Calu3 (cell line): ENCODE measurements at regions of chr1 and their contacts with region 1.

Region 1: DNA sequence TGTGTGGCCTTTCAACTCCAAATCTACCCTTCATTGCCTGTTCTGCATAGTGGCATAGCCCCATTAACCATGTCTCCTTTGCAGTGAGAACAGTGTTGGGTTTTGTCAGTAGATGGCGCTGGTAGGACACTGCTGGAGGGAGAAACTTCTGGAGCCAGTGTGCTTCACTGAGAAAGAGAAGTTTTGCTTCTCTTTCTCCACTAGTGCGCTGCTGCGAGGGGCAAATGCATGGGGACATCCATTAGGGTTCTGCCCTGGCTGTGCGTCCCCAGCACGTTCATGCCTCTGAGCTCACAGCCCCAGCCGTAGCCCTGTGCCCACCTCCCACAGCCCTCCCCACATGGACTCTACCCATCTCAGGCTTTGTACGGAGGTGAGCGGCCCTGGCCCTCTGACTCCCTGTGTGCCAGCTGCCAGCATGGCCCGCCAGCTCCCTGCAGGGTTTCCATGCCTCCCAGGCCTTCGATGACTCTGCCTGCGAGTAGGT is 53.1 kb downstream of the RIMS3 start:
- DNase-seq: peak; percentile 71
- H3K4me3 Mint-ChIP-seq: no peak overlapping the region
- H3K27ac Mint-ChIP-seq: no peak overlapping the region
- H3K4me1 Mint-ChIP-seq: no peaks in the 10 kb centered on the region
- H3K27me3 Mint-ChIP-seq: peaks cover 27% of the 10 kb centered on the region
- CTCF ChIP-seq: peak; percentile 66

Region 2: DNA sequence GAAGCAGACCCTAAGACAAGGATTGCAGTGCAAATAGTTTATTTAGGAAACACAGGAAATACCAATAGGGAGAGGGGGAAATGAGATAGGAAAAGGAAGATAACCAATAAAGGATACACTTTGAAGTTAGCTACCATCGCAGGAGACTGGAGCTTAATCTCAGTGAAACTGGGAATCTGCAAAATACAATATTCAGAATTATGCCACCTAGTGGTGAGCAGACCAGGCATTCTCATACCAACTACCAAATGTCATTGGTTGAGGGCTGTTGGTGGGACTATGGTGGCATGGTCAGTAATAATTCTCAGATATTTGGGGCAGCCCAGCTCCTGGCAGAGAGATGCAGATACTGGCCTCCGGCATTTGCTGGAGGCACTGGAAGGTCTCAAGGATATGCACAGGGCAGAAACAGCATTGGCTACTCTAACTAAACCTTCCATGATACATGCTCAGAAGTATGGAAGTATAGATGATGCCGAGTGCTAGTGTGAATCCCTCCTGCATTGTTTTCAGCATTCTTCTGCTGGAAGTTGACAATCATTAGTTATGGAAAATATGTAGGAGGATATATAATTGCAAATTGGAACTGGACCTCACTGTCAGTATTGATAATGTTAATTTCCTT is 173.9 kb before region 1 on chr1:
- CTCF ChIA-PET with region 1: no interaction called
- intact Hi-C with region 1: no loop called
- DNase-seq: peak; percentile 9
- H3K4me3 Mint-ChIP-seq: no peak overlapping the region
- H3K27ac Mint-ChIP-seq: no peak overlapping the region
- H3K4me1 Mint-ChIP-seq: no peaks in the 10 kb centered on the region
- H3K27me3 Mint-ChIP-seq: no peaks in the 10 kb centered on the region
- CTCF ChIP-seq: peak; percentile 26

Region 3: GRCh38 chr1:40840526-40841323 is 228.3 kb after region 1 on chr1:
- CTCF ChIA-PET with region 1: no interaction called
- intact Hi-C with region 1: loop called (anchors 5 kb)
- DNase-seq: no peak
- H3K4me3 Mint-ChIP-seq: no peak overlapping the region
- H3K27ac Mint-ChIP-seq: no peak overlapping the region
- H3K4me1 Mint-ChIP-seq: no peaks in the 10 kb centered on the region
- H3K27me3 Mint-ChIP-seq: peaks cover 19% of the 10 kb centered on the region
- CTCF ChIP-seq: no peak